Activated CD8-positive, alpha-beta T cell treated with anti-CD3 and anti-CD28 coated beads, Interleukin-2, amount 10 ng/mL, durations not matched to agents 7 days and 5 days (primary cell): ENCODE measurements at regions of chr14 and their contacts with region 1.

Region 1: GRCh38 chr14:75968456-75968855 is 13.3 kb downstream of the TGFB3 start:
- DNase-seq: no peak
- ATAC-seq: no peak
- H3K4me3 Mint-ChIP-seq: no peak overlapping the region
- H3K27ac Mint-ChIP-seq: no peak overlapping the region
- H3K4me1 Mint-ChIP-seq: no peaks in the 10 kb centered on the region
- H3K27me3 Mint-ChIP-seq: no peaks in the 10 kb centered on the region

Region 2: GRCh38 chr14:75952489-75952888 is 16.0 kb before region 1 on chr14:
- CTCF ChIA-PET with region 1: no interaction called
- POLR2A ChIA-PET with region 1: no interaction called
- DNase-seq: no peak
- ATAC-seq: no peak
- H3K4me3 Mint-ChIP-seq: no peak overlapping the region
- H3K27ac Mint-ChIP-seq: no peak overlapping the region
- H3K4me1 Mint-ChIP-seq: no peaks in the 10 kb centered on the region
- H3K27me3 Mint-ChIP-seq: no peaks in the 10 kb centered on the region

Region 3: GRCh38 chr14:75982266-75983018 is 14.0 kb after region 1 on chr14:
- CTCF ChIA-PET with region 1: interaction called, 11 read pairs
- POLR2A ChIA-PET with region 1: interaction called, 4 read pairs
- DNase-seq: peak; percentile 80
- ATAC-seq: peak; percentile 70
- H3K4me3 Mint-ChIP-seq: peak overlapping the region; percentile 69
- H3K27ac Mint-ChIP-seq: no peak overlapping the region
- H3K4me1 Mint-ChIP-seq: peaks cover 49% of the 10 kb centered on the region
- H3K27me3 Mint-ChIP-seq: peaks cover 11% of the 10 kb centered on the region

Region 4: GRCh38 chr14:76012354-76012753 is 43.9 kb after region 1 on chr14:
- CTCF ChIA-PET with region 1: no interaction called
- POLR2A ChIA-PET with region 1: no interaction called
- DNase-seq: no peak
- ATAC-seq: no peak
- H3K4me3 Mint-ChIP-seq: no peak overlapping the region
- H3K27ac Mint-ChIP-seq: no peak overlapping the region
- H3K4me1 Mint-ChIP-seq: no peaks in the 10 kb centered on the region
- H3K27me3 Mint-ChIP-seq: no peaks in the 10 kb centered on the region